ENCODE measurements at regions of chr3 and their contacts with region 1.

Region 1: GRCh38 chr3:123335007-123335670 is 113.8 kb downstream of the ADCY5 start:
- DNase-seq: peak in 2 of 6 donors; percentile 1 to 41
- ATAC-seq: no peak
- H3K4me3 ChIP-seq: no peak overlapping the region
- H3K27ac ChIP-seq: no peak overlapping the region
- H3K4me1 ChIP-seq: peaks cover 8 to 10% (median 10%) of the 10 kb centered on the region in 3 donors
- H3K27me3 ChIP-seq: no peaks in the 10 kb centered on the region
- CTCF ChIP-seq: no peak

Region 2: GRCh38 chr3:123284399-123285010 is 50.6 kb before region 1 on chr3:
- intact Hi-C with region 1: no loop called
- DNase-seq: peak in 2 of 6 donors; percentile 8 to 45
- ATAC-seq: no peak
- H3K4me3 ChIP-seq: no peak overlapping the region
- H3K27ac ChIP-seq: no peak overlapping the region
- H3K4me1 ChIP-seq: no peaks in the 10 kb centered on the region
- H3K27me3 ChIP-seq: no peaks in the 10 kb centered on the region
- CTCF ChIP-seq: no peak

Region 3: GRCh38 chr3:123489400-123490004 is 154.4 kb after region 1 on chr3:
- intact Hi-C with region 1: loop called in 2 of 3 experiments (anchors 2 to 10 kb)
- DNase-seq: peak in 4 of 6 donors; percentile 29 to 83 (median 68)
- ATAC-seq: peak; percentile 73 to 95 (median 92)
- H3K4me3 ChIP-seq: no peak overlapping the region
- H3K27ac ChIP-seq: no peak overlapping the region
- H3K4me1 ChIP-seq: no peaks in the 10 kb centered on the region
- H3K27me3 ChIP-seq: no peaks in the 10 kb centered on the region
- CTCF ChIP-seq: peak; percentile 70 to 77 (median 76)

Measured in pancreas (tissue), 10 donors.